Activated naive CD4-positive, alpha-beta T cell treated with anti-CD3 and anti-CD28 coated beads, Interleukin-2, amount 10 ng/mL, durations not matched to agents 7 days and 5 days (primary cell): ENCODE measurements at regions of chr9 and their contacts with region 1.

Region 1: GRCh38 chr9:137223078-137223970 is 1.3 kb upstream of the RNF208 start:
- DNase-seq: peak; percentile 98
- H3K4me3 Mint-ChIP-seq: peak overlapping the region; percentile 81
- H3K27ac Mint-ChIP-seq: peak overlapping the region; percentile 84
- H3K4me1 Mint-ChIP-seq: peaks cover 25% of the 10 kb centered on the region
- H3K27me3 Mint-ChIP-seq: peaks cover 5% of the 10 kb centered on the region

Region 2: DNA sequence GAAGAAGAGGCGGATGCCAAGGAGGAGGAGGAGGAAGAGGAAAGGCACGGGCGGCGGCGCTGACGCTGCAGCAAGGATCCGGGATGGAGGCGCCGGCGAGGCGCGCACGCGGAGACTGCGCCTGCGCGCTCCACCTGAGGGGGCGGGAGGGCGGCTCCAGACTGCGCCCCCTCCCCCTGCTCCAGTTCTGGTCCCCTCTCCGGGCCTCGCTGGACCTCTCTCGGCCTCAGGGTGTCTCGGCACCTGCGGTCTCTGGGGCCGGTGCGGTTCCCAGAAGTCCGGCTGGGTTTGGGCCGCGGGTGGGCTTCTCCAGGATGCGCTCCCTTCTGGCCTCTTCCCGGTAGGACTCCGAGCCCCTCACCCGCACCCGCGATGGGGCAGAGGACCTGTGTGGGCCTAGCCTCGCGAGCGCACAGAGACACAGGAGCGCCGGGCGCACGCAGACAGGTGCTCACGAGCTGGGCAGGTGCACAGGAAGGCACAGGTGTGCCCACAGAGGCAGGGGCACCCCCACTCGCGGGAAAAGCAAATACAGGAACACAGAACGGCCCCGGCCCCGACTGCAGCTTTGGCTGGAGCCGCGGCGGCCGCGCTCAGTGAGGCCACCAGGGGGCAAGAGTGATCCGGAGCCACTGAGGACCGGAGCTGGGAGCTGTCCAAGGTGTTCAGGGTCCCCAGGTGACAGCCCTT is 177.1 kb before region 1 on chr9 and contains the start of gene NPDC1:
- CTCF ChIA-PET with region 1: interaction called, 10 read pairs
- DNase-seq: peak; percentile 92
- H3K4me3 Mint-ChIP-seq: peak within 1 kb of the TSS; percentile 75
- H3K27ac Mint-ChIP-seq: peak within 1 kb of the TSS; percentile 68
- H3K4me1 Mint-ChIP-seq: peaks cover 35% of the 10 kb centered on the region
- H3K27me3 Mint-ChIP-seq: peaks cover 86% of the 10 kb centered on the region

Region 3: DNA sequence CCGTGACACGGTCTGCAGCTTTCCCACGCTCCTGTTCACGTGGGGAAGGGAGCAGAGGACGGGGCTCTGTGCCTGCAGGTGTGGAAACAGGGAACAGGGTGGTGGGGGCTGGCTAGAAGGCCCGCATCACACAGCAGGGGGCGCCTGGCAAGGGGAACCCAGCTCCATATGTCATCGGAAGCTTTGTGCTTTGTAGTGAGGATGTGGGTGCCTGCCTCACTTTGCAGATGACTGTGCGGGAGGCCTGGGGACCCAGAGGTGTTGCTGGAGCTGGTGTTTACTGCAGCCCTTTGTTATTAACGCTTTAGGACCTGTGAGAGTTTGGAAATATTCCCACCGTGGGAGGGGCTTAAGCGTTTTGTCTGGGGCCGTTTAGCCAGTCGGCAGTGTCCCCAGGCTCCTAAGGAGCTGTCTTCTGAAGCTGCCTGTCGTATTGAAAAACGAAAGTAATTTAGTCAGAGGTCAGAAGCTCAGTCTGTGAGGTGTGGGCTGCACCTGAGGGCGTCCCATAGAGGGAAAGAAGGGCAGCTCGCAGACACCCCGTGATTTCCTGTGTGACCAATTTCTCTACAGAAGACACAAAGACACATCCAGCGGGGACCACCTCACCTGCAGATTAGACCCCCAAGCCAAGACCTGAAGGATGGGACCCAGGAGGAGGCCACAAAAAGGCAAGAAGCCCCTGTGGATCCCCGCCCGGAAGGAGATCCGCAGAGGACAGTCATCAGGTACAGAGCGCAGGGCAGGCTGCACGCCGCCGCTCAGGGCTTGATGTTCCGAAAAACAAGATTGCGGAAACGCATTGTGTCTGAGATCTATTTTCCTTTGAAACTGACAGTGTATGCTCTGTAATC is 127.4 kb before region 1 on chr9:
- CTCF ChIA-PET with region 1: interaction called, 10 read pairs
- DNase-seq: peak; percentile 93
- H3K4me3 Mint-ChIP-seq: peak overlapping the region; percentile 72
- H3K27ac Mint-ChIP-seq: peak overlapping the region; percentile 98
- H3K4me1 Mint-ChIP-seq: peaks cover 23% of the 10 kb centered on the region
- H3K27me3 Mint-ChIP-seq: no peaks in the 10 kb centered on the region

Region 4: GRCh38 chr9:137116728-137117127 is 106.6 kb before region 1 on chr9:
- CTCF ChIA-PET with region 1: interaction called, 19 read pairs
- DNase-seq: no peak
- H3K4me3 Mint-ChIP-seq: no peak overlapping the region
- H3K27ac Mint-ChIP-seq: no peak overlapping the region
- H3K4me1 Mint-ChIP-seq: peaks cover 8% of the 10 kb centered on the region
- H3K27me3 Mint-ChIP-seq: no peaks in the 10 kb centered on the region

Region 5: DNA sequence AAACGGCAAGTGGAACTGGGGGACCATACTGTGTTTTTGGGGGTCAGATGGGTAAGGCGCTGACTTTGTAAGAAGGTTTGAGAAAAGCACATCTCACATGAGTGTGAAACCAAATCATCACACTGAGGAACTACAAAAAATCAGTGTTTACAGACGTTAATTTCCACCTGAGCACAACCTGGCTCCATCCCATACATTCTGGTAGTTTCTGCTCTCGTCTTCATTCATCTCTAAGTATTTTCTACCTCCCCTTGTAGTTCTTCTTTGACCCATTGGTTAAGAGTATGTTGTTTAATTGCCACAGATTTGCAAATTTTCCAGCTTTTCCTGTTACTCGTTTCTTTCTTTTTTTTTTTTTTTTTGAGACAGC is 99.9 kb before region 1 on chr9:
- CTCF ChIA-PET with region 1: interaction called, 19 read pairs
- DNase-seq: no peak
- H3K4me3 Mint-ChIP-seq: no peak overlapping the region
- H3K27ac Mint-ChIP-seq: no peak overlapping the region
- H3K4me1 Mint-ChIP-seq: peaks cover 31% of the 10 kb centered on the region
- H3K27me3 Mint-ChIP-seq: no peaks in the 10 kb centered on the region

Region 6: GRCh38 chr9:137188490-137189296 is 34.6 kb before region 1 on chr9 and contains the starts of genes ANAPC2 and SSNA1:
- CTCF ChIA-PET with region 1: interaction called, 21 read pairs
- DNase-seq: peak; percentile 92
- H3K4me3 Mint-ChIP-seq: peak within 1 kb of the TSS; percentile 97
- H3K27ac Mint-ChIP-seq: peak within 1 kb of the TSS; percentile 96
- H3K4me1 Mint-ChIP-seq: peaks cover 37% of the 10 kb centered on the region
- H3K27me3 Mint-ChIP-seq: peaks cover 10% of the 10 kb centered on the region

Region 7: DNA sequence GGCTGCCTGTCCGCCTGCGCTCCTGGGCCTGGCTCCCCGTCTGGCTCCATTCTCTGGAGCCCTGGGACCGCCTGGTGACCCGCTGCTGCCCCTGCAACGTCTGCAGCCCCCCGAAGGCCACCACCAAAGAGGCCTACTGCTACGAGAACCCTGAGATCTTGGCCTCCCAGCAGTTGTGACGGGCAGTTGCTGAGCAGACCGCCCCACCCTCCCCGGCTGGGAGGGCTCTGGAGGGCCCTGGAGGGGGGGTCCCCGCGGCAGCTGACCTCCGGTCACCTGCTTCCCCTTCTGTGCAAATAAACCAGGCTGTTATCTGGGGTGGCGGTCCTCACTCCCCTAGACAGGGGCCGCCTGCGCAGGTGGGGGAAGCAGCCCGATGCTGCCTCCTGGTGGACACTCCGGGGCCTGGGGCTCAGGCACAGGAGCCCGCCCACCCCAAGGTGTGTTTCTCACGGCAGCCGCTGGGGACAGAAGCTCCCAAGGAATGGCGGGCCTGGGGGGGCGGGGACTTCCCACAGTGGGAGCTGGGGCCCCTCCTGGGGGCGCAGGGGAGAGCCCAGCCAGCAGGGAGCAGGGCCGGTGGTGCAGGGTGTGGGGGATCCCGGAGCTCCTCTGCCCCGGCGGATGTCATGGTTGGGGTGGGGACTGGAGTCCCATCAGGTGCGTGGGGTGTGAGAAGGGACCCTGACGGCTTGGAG is 13.1 kb after region 1 on chr9:
- CTCF ChIA-PET with region 1: interaction called, 45 read pairs
- DNase-seq: peak; percentile 95
- H3K4me3 Mint-ChIP-seq: no peak overlapping the region
- H3K27ac Mint-ChIP-seq: no peak overlapping the region
- H3K4me1 Mint-ChIP-seq: peaks cover 22% of the 10 kb centered on the region
- H3K27me3 Mint-ChIP-seq: peaks cover 21% of the 10 kb centered on the region